ENCODE measurements at regions of chr2 and their contacts with region 1.

Region 1: DNA sequence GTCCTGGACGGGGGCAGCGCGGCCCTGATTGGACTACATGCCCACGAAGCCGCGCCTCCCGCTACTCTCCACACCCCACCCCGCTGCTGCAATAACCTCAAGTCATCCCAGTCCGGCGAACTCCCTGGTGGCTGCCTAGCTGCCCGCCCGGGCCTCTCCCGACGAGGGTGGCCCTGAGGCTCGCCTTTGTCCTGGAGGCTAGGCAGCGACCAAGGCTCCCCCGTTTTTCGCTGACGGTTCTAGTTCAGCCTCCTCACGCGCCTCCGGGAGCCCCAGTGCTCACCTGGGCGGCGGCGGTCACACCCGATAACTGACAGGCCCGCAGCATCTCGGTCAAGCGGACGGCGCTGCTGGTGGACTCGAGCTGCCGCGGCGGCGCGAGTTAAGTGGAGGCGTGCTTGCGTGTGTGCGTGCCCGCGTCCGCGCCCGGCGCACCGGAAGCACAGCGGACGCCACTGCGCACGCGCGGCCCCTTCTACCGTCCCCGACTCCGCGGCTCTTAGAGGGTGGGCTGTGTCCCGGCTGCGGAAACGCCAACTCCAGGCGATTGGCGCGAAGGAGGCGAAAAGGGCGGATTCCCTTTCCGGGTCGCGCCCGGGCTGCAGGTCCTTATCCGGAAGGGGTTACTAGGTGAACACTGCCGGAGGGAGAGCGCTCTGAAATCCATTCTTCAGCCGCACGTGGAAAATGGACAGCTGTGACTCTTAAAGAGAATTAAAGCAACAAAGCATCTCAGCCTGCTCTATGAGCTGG is at the start of gene IMMT:
- DNase-seq: peak; percentile 86 to 98 (median 90)
- ATAC-seq: peak; percentile 90
- H3K4me3 ChIP-seq: peak within 1 kb of the TSS; percentile 79
- H3K27ac ChIP-seq: peak within 1 kb of the TSS; percentile 98
- H3K4me1 ChIP-seq: peaks cover 24 to 39% of the 10 kb centered on the region in 2 experiments
- H3K27me3 ChIP-seq: no peaks in the 10 kb centered on the region
- CTCF ChIP-seq: no peak
- EP300 ChIP-seq: 0 out of 2 replicates have a peak, but pooled peaks have one; percentile 19
- POLR2A ChIP-seq: peak; percentile 100
- RAD21 ChIP-seq: no peak; a peak in 1 of 4 replicates
- polyA plus RNA-seq, gene IMMT: 153 to 294 TPM

Region 2: GRCh38 chr2:86170449-86170848 is 24.8 kb before region 1 on chr2:
- CTCF ChIA-PET with region 1: no interaction called
- POLR2A ChIA-PET with region 1: interaction called, 10 read pairs
- in situ Hi-C with region 1: no loop called
- intact Hi-C with region 1: no loop called
- DNase-seq: no peak
- ATAC-seq: no peak
- H3K4me3 ChIP-seq: no peak overlapping the region
- H3K27ac ChIP-seq: no peak overlapping the region
- H3K4me1 ChIP-seq: no peaks in the 10 kb centered on the region
- H3K27me3 ChIP-seq: no peaks in the 10 kb centered on the region
- CTCF ChIP-seq: no peak
- EP300 ChIP-seq: no peak
- POLR2A ChIP-seq: no peak
- RAD21 ChIP-seq: no peak

Region 3: GRCh38 chr2:86226636-86227520 is 31.6 kb after region 1 on chr2:
- CTCF ChIA-PET with region 1: no interaction called
- POLR2A ChIA-PET with region 1: no interaction called
- in situ Hi-C with region 1: no loop called
- intact Hi-C with region 1: no loop called
- DNase-seq: no peak
- ATAC-seq: no peak
- H3K4me3 ChIP-seq: no peak overlapping the region
- H3K27ac ChIP-seq: no peak overlapping the region
- H3K4me1 ChIP-seq: peaks cover 7 to 8% of the 10 kb centered on the region in 2 experiments; a peak in 2 of 5 replicates
- H3K27me3 ChIP-seq: peaks cover 28 to 43% of the 10 kb centered on the region in 2 experiments; a peak in 4 of 5 replicates
- CTCF ChIP-seq: no peak
- EP300 ChIP-seq: no peak
- POLR2A ChIP-seq: no peak
- RAD21 ChIP-seq: no peak

Region 4: GRCh38 chr2:86243950-86244733 is 48.9 kb after region 1 on chr2:
- CTCF ChIA-PET with region 1: no interaction called
- POLR2A ChIA-PET with region 1: interaction called, 3 read pairs
- in situ Hi-C with region 1: no loop called
- intact Hi-C with region 1: loop called (anchors 5 kb)
- DNase-seq: peak in 2 of 4 experiments; percentile 27 to 32
- ATAC-seq: peak; percentile 63
- H3K4me3 ChIP-seq: no peak overlapping the region
- H3K27ac ChIP-seq: no peak overlapping the region
- H3K4me1 ChIP-seq: no peaks in the 10 kb centered on the region
- H3K27me3 ChIP-seq: peaks cover 36 to 45% of the 10 kb centered on the region in 2 experiments; a peak in 4 of 5 replicates
- CTCF ChIP-seq: peak; percentile 23 to 36 (median 27); a peak in 2 of 6 replicates
- EP300 ChIP-seq: no peak
- POLR2A ChIP-seq: no peak
- RAD21 ChIP-seq: no peak